WTC11 (cell line): ENCODE measurements at regions of chr19 and their contacts with region 1.

Region 1: DNA sequence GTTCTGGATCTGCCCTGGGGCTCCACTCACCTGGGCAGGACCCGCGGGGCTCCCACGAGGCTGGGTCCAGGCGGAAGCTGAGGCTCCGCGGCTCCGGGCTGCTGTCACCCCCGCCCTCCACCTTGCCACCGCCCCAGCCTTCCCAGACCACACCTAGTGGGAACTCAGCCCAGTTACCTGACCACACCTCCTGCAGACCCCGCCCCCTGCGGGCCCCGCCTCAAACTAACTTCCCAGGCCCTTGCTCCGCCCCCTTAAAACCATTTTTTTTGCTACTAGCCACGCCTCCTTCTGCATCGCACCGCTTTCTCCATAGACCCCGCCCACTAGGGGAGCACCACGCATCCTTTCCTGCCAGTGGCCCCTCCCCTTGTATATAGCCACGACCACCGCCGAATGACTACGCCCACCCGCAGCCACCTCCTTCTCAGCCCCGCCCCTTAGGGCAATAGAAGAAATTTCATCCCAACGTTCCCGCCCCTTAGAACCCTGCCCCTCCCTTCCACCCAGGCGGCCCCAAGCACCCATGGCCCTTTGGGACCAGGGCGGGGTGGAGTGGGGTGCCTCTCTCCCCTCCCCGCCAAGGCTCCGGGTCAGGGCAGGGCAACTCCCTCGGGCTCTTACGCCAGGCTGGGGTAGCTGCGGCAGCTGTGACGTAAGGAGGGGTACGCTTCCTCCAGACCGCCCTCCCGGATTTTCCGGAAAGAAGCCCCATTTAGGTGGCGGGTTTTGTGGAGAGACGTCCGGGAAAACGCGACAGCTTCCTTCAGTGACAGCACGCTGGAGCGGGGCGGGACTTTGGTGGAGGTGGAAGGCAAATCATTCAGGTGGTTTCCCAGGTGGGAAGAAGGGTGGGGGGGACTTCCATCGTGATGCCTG is at the start of gene SH2D3A:
- DNase-seq: peak; percentile 97
- ATAC-seq: peak; percentile 83
- H3K4me3 Mint-ChIP-seq: peak within 1 kb of the TSS; percentile 89
- H3K27ac Mint-ChIP-seq: peak within 1 kb of the TSS; percentile 100
- H3K4me1 Mint-ChIP-seq: peaks cover 20% of the 10 kb centered on the region
- H3K27me3 Mint-ChIP-seq: no peaks in the 10 kb centered on the region; the same call in 1 of the 2 replicates
- CTCF ChIP-seq: no peak
- total RNA-seq, gene SH2D3A: 25.1 to 30.3 TPM (median 26.7 TPM) in 3 replicates

Region 2: DNA sequence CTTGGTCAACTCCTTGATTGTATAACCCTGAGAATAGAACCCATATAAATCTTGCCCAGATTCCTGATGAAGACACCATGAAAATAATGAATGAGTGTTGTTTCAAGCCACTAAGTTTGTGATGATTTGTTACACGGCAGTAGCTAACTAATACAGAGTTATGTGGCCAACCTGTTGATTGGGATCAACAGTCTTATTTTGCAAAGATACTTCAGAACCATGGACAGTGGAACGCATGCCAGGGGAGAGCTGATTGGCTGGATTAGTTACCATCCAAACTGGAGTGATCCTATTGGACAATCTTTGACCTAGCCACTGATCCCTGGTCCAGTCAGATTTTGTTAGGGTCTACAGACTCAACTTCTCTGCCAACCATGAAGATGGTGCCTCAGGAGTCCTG is 203.2 kb before region 1 on chr19:
- CTCF ChIA-PET with region 1: no interaction called
- POLR2A ChIA-PET with region 1: no interaction called
- DNase-seq: no peak
- ATAC-seq: no peak
- H3K4me3 Mint-ChIP-seq: no peak overlapping the region
- H3K27ac Mint-ChIP-seq: no peak overlapping the region
- H3K4me1 Mint-ChIP-seq: no peaks in the 10 kb centered on the region
- H3K27me3 Mint-ChIP-seq: peaks cover 22% of the 10 kb centered on the region
- CTCF ChIP-seq: no peak

Region 3: GRCh38 chr19:6753178-6754031 is 14.2 kb before region 1 on chr19:
- CTCF ChIA-PET with region 1: interaction called, 26 read pairs
- POLR2A ChIA-PET with region 1: interaction called, 40 read pairs
- DNase-seq: peak; percentile 99
- ATAC-seq: peak; percentile 93
- H3K4me3 Mint-ChIP-seq: peak overlapping the region; percentile 80
- H3K27ac Mint-ChIP-seq: peak overlapping the region; percentile 98
- H3K4me1 Mint-ChIP-seq: peaks cover 5% of the 10 kb centered on the region; the same call in 1 of the 2 replicates
- H3K27me3 Mint-ChIP-seq: no peaks in the 10 kb centered on the region
- CTCF ChIP-seq: no peak